ENCODE measurements at regions of chr11 and their contacts with region 1.

Region 1: DNA sequence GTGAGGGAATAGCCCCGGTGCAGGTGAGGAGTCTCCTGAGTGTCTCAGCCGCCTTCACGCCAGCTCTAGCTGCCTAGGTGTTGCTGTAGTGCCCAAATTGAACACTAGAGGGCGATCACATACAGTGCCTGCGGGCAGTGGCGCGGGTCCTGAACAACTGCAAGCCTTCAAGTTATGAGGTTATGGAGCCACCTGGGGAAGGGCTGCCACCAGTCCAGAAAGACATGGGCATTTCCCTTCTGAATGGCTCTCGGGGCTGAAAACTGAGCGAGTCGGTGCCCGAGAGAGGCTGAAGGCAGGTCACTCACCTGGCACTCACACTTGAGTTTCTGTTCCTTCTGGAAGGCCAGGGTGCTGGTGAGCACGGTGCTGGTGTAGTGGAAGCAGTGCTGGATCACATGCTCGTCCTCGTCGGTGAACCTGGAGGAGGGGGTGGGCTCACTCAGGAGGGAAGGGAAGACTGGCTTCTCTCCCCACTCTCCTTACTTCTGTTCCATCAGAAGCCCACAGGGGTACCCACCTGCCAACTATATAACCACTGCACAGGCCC is 88.4 kb downstream of the PDE2A start:
- DNase-seq: peak; percentile 83

Region 2: GRCh38 chr11:71396548-71397123 is 1189.2 kb before region 1 on chr11:
- intact Hi-C with region 1: loop called in 1 of 2 experiments (anchors 5 kb)
- DNase-seq: no peak

Region 3: GRCh38 chr11:72439455-72439854 is 146.4 kb before region 1 on chr11:
- intact Hi-C with region 1: no loop called
- DNase-seq: no peak

Region 4: GRCh38 chr11:72561856-72562255 is 24.0 kb before region 1 on chr11:
- intact Hi-C with region 1: no loop called
- DNase-seq: peak; percentile 69

Region 5: DNA sequence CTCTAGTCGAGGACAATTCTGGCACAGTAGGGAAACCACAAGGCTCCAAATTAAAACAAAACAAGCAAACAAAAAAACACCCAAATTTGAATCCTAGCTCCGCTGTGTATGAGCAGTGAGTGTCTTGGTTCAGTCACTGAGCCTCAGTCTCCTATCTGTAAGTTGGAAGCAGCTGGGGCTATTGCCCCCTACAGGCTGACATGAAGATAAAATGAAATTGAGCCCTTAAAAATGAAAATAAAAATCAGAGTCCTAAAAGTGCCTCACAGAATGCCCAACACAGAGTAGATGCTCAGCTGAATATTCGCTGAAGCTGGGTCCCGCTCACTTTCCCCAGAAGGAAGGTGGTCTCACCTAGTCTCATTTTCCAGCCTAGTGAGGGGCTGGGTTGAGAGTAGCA is 23.2 kb after region 1 on chr11:
- intact Hi-C with region 1: no loop called
- DNase-seq: no peak

Region 6: DNA sequence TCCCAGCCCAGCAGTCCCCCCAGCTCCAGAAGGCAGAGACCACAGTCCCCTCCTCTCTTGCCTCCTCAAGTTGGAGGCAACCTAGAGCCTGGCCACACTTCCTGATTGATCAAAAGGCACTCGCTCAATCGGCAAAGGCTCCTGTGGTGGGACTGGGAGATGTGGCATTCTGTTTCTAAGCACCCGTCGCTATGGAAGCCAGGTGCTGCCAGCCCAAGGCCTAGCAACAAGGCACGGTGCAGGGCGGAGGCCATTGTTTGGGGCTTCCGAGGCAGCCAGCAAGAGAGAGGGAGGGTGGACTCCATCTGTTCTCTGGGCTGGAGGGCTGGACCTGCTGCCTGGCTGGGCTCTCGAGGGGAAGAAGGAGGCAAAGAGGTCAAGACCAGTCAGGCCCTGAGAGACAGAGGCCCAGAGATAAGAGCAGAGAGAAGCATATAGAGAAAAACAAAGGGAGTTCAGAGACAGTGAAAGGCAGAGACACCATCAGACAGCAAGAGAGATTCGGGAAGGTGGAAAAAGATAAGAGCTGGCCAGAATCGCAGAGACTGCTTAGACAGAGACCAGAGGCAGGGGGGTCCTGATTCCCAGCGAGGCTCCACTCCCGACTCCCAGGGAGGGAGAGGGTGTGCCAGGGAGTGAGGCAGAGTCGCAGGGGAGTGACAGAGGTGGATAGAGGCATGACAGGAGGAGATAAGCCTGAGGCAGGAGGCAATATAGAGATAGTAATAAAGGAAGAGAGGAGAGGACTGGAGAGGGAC is 67.2 kb after region 1 on chr11:
- intact Hi-C with region 1: no loop called
- DNase-seq: no peak

Region 7: GRCh38 chr11:72683782-72684200 is 98.0 kb after region 1 on chr11:
- intact Hi-C with region 1: loop called in 1 of 2 experiments (anchors 2 kb)
- DNase-seq: peak; percentile 91